ENCODE measurements at regions of chr4 and their contacts with region 1.

Region 1: DNA sequence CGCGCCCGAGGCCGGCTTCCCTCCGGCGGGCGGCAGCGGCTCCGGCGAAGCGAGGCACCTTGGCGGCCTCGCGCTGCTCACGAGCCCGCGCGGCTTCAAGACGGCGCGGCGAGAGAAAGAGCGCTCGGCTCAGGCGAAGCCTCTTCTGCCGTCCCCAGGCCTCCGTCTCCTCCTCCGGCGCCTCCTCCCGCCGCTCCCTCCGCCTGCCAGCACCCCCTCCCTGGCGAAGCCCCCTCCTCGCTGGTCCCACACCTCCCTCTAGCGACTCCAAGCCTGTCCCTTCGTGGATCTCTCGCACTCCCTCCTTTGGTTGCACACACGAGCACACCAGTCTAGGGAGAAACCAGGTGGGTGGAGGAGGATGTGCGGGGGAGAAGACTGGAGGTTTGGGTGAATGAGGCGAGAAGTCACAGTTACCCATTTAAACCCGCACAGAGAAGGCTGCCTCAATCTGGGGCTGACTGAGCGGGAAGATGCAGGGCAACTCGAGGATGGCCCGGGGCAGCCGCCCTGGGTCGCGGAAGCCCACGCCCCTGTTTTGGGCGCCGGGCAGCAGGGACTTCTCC is at the start of gene CAMK2D:
- DNase-seq: peak in 1 of 2 donors; percentile 93
- ATAC-seq: peak; percentile 39 to 68 (median 55)
- H3K4me3 ChIP-seq: peak within 1 kb of the TSS; percentile 76
- H3K4me3 Mint-ChIP-seq: peak within 1 kb of the TSS; percentile 97
- H3K27ac ChIP-seq: peak within 1 kb of the TSS; percentile 98
- H3K27ac Mint-ChIP-seq: peak within 1 kb of the TSS; percentile 94 to 99
- H3K4me1 ChIP-seq: peaks cover 10% of the 10 kb centered on the region
- H3K4me1 Mint-ChIP-seq: peaks cover 41 to 44% of the 10 kb centered on the region in 2 donors
- H3K27me3 ChIP-seq: no peaks in the 10 kb centered on the region
- H3K27me3 Mint-ChIP-seq: peaks cover 0 to 2% of the 10 kb centered on the region in 2 donors
- CTCF ChIP-seq: no peak
- total RNA-seq, gene CAMK2D: 31.6 to 40.1 (median 34.5) TPM

Region 2: GRCh38 chr4:113547487-113548042 is 214.1 kb before region 1 on chr4:
- intact Hi-C with region 1: loop called (anchors 1 kb)
- DNase-seq: peak; percentile 69 to 96
- ATAC-seq: peak; percentile 99 to 100 (median 99)
- H3K4me3 ChIP-seq: no peak overlapping the region
- H3K4me3 Mint-ChIP-seq: no peak overlapping the region
- H3K27ac ChIP-seq: no peak overlapping the region
- H3K27ac Mint-ChIP-seq: peak overlapping the region in 1 of 2 donors; percentile 72
- H3K4me1 ChIP-seq: peaks cover 3% of the 10 kb centered on the region
- H3K4me1 Mint-ChIP-seq: peaks cover 11% of the 10 kb centered on the region in 2 donors
- H3K27me3 ChIP-seq: no peaks in the 10 kb centered on the region
- H3K27me3 Mint-ChIP-seq: no peaks in the 10 kb centered on the region
- CTCF ChIP-seq: peak; percentile 98

Region 3: DNA sequence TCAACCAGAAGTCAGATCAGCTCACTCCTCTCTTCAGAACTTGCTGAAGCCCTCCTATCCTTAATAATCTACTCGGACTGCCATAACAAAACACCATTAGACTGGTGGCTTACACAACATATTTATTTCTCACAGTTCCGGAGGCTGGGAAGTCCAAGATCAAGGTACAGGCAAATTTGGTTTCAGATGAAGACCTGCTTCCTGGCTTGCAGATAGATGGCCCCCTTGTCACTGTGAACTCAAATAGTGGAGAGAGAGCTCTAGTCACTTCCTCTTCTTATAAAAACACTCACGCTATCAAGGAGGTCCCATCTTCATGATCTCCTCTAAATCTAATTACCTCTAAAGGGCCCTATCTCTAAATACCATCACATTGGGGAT is 125.3 kb before region 1 on chr4:
- intact Hi-C with region 1: loop called (anchors 5 kb)
- DNase-seq: peak in 1 of 2 donors; percentile 65
- ATAC-seq: peak; percentile 79 to 89 (median 87)
- H3K4me3 ChIP-seq: no peak overlapping the region
- H3K4me3 Mint-ChIP-seq: peak overlapping the region; percentile 69
- H3K27ac ChIP-seq: peak overlapping the region; percentile 50
- H3K27ac Mint-ChIP-seq: peak overlapping the region; percentile 60 to 84
- H3K4me1 ChIP-seq: peaks cover 24% of the 10 kb centered on the region
- H3K4me1 Mint-ChIP-seq: peaks cover 43 to 45% of the 10 kb centered on the region in 2 donors
- H3K27me3 ChIP-seq: no peaks in the 10 kb centered on the region
- H3K27me3 Mint-ChIP-seq: no peaks in the 10 kb centered on the region
- CTCF ChIP-seq: peak; percentile 45

Region 4: GRCh38 chr4:113692809-113693411 is 68.8 kb before region 1 on chr4:
- intact Hi-C with region 1: loop called (anchors 5 kb)
- DNase-seq: peak in 1 of 2 donors; percentile 36
- ATAC-seq: peak; percentile 32 to 90 (median 68)
- H3K4me3 ChIP-seq: no peak overlapping the region
- H3K4me3 Mint-ChIP-seq: peak overlapping the region; percentile 65
- H3K27ac ChIP-seq: peak overlapping the region; percentile 66
- H3K27ac Mint-ChIP-seq: peak overlapping the region; percentile 81 to 87
- H3K4me1 ChIP-seq: no peaks in the 10 kb centered on the region
- H3K4me1 Mint-ChIP-seq: peaks cover 28 to 33% of the 10 kb centered on the region in 2 donors
- H3K27me3 ChIP-seq: no peaks in the 10 kb centered on the region
- H3K27me3 Mint-ChIP-seq: no peaks in the 10 kb centered on the region
- CTCF ChIP-seq: no peak

Region 5: GRCh38 chr4:113958766-113959538 is 197.2 kb after region 1 on chr4:
- intact Hi-C with region 1: no loop called
- DNase-seq: no peak
- ATAC-seq: peak in 1 of 3 donors; percentile 40
- H3K4me3 ChIP-seq: no peak overlapping the region
- H3K4me3 Mint-ChIP-seq: no peak overlapping the region
- H3K27ac ChIP-seq: no peak overlapping the region
- H3K27ac Mint-ChIP-seq: no peak overlapping the region
- H3K4me1 ChIP-seq: no peaks in the 10 kb centered on the region
- H3K4me1 Mint-ChIP-seq: no peaks in the 10 kb centered on the region
- H3K27me3 ChIP-seq: no peaks in the 10 kb centered on the region
- H3K27me3 Mint-ChIP-seq: peaks cover 5 to 6% of the 10 kb centered on the region in 2 donors
- CTCF ChIP-seq: no peak

Region 6: DNA sequence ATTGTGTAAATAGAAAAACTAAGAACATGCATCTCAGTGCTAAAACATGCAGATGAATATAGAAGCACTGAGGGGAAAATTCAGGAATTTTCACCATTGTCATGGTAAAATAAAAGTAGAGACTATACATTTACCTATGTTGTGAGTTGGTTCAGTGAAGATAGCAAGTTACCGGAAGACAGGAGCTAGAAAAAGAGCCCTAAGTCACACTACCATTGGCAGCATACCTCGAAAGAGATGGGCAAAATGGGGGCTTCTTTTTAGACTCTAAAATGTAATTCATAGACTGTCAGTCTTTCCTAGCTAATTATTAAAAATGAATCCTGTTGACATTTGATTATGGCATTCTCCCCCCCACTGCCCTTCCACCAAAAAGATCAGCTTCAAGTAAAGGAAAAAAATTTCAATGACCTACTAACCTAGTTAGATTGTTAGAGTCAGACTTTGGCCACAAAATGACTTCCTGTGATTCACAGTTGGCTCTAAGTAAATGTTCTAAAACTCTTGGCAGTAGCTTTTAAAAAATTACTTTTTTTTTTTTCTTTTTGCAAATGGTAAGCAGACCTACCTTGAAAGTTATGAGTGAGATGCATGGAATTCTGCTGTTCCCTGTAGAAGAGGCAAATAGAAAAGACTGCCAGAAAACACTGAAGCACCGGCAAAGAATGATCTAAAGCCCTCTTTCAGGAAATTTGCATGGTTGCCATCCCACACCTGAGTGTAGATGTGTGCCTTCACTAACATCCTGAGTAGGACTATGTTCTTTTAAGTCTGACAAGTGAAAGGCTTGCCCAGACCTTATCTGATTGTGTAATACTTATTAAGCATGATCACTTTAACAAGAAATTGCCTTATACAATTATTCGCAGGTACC is 244.1 kb after region 1 on chr4:
- intact Hi-C with region 1: loop called (anchors 5 kb)
- DNase-seq: peak in 1 of 2 donors; percentile 43
- ATAC-seq: peak; percentile 80 to 84 (median 81)
- H3K4me3 ChIP-seq: no peak overlapping the region
- H3K4me3 Mint-ChIP-seq: peak overlapping the region; percentile 87
- H3K27ac ChIP-seq: peak overlapping the region; percentile 42
- H3K27ac Mint-ChIP-seq: peak overlapping the region; percentile 88 to 90
- H3K4me1 ChIP-seq: peaks cover 10% of the 10 kb centered on the region
- H3K4me1 Mint-ChIP-seq: peaks cover 59 to 64% of the 10 kb centered on the region in 2 donors
- H3K27me3 ChIP-seq: no peaks in the 10 kb centered on the region
- H3K27me3 Mint-ChIP-seq: no peaks in the 10 kb centered on the region
- CTCF ChIP-seq: no peak